Activated CD8-positive, alpha-beta memory T cell treated with anti-CD3 and anti-CD28 coated beads, Interleukin-2, amount 10 ng/mL, durations not matched to agents 7 days and 5 days (primary cell): ENCODE measurements at regions of chr2 and their contacts with region 1.

Region 1: DNA sequence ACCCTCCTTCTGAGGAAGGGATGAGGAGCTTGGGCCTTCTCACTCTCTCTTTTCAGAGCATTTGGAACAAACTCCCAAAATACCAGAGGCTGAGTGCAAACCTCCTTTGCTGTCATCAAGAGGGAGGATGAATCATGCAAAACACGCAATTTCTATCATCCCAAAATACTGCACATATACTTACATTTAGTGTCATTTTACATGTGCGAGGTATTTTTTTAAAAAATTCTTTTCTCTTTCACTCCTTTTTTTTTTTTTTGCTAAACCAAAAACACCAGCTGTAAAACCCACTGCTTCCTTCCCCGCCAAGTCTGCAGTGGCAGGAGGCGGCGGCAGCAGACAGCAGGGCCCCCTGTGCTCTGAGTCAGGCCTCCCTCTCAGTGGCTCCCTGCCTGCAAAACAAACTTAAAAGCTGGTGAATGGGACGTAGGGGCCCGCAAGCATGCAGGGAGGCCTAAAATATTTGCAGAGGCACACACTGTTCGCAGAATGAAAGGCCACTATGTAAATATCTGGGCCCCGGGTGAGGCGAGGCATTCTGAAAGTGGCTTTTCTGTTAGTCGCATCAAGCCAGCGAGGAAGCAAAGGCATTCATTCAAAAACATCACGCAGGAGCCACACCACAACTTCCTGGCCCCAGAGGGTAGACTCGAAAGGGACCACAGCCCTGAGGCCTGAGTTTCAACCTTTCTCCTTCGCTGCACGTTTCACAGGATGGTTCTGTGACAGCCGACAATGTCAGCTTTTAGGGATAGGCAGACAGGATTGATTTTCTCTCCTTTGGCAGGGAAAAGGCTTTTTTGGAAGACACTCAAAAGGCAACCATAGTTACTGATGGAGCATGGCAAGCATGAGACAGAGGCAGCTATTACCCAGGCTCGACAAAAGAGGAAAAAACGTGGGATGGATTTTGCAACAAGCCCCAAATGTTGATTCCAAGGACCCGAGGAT is 73.4 kb downstream of the ACTR2 start:
- DNase-seq: peak; percentile 91
- ATAC-seq: peak; percentile 94
- H3K4me3 Mint-ChIP-seq: peak overlapping the region; percentile 63
- H3K27ac Mint-ChIP-seq: peak overlapping the region; percentile 86
- H3K4me1 Mint-ChIP-seq: peaks cover 43% of the 10 kb centered on the region
- H3K27me3 Mint-ChIP-seq: peaks cover 66% of the 10 kb centered on the region

Region 2: DNA sequence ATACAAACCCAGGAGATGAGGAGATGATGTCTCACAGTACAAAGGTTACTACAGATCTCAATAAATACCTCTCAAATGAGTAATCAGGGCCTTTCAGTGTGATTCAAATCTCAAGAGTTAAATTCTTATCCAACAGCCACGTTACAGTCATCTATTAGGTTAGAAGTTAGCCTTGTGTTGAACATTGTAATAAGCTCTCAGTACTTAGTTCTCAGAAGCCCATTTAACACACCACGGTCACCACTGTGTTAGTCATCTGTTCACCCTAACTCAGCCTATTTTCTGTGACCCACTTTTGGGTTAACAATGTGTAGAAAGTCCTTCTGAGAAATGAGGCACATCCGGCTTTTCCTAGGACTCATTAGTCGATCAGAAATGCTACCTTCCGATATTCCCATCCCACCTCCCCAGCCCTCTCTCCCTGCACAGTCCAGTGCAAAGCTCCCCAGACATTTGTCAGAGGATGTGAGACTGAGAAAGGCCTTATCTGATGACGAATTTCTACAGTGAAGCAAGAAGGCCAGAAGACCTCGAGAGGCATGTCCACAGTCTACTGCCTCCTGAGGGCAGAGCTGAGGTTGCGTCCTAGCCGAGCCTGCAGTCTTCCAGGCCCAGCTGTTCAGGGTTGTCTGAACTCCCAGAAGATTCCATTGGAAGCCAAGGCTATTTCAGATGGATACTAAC is 19.1 kb after region 1 on chr2:
- CTCF ChIA-PET with region 1: interaction called, 23 read pairs
- DNase-seq: peak; percentile 63
- ATAC-seq: peak; percentile 94
- H3K4me3 Mint-ChIP-seq: peak overlapping the region; percentile 49
- H3K27ac Mint-ChIP-seq: peak overlapping the region; percentile 85
- H3K4me1 Mint-ChIP-seq: peaks cover 33% of the 10 kb centered on the region
- H3K27me3 Mint-ChIP-seq: peaks cover 7% of the 10 kb centered on the region